ENCODE measurements at regions of chr13 and their contacts with region 1.

Region 1: GRCh38 chr13:67230404-67231288 is 510 bp upstream of the PCDH9 start:
- DNase-seq: peak; percentile 92
- H3K4me3 ChIP-seq: peak overlapping the region; percentile 89
- H3K27ac ChIP-seq: peak overlapping the region; percentile 81
- H3K27me3 ChIP-seq: no peaks in the 10 kb centered on the region
- CTCF ChIP-seq: no peak

Region 2: GRCh38 chr13:66895780-66896179 is 334.9 kb before region 1 on chr13:
- CTCF ChIA-PET with region 1: no interaction called
- POLR2A ChIA-PET with region 1: no interaction called
- DNase-seq: no peak
- H3K4me3 ChIP-seq: no peak overlapping the region
- H3K27ac ChIP-seq: no peak overlapping the region
- H3K27me3 ChIP-seq: no peaks in the 10 kb centered on the region
- CTCF ChIP-seq: no peak

Region 3: GRCh38 chr13:67013709-67014108 is 216.9 kb before region 1 on chr13:
- CTCF ChIA-PET with region 1: no interaction called
- POLR2A ChIA-PET with region 1: no interaction called
- DNase-seq: no peak
- H3K4me3 ChIP-seq: no peak overlapping the region
- H3K27ac ChIP-seq: no peak overlapping the region
- H3K27me3 ChIP-seq: no peaks in the 10 kb centered on the region
- CTCF ChIP-seq: no peak

Region 4: GRCh38 chr13:67416047-67416925 is 185.6 kb after region 1 on chr13:
- CTCF ChIA-PET with region 1: interaction called, 14 read pairs
- POLR2A ChIA-PET with region 1: no interaction called
- DNase-seq: peak; percentile 2
- H3K4me3 ChIP-seq: no peak overlapping the region
- H3K27ac ChIP-seq: no peak overlapping the region
- H3K27me3 ChIP-seq: no peaks in the 10 kb centered on the region
- CTCF ChIP-seq: peak; percentile 80

Measured in AG04450 (cell line).